ENCODE measurements at regions of chr7 and their contacts with region 1.

Region 1: DNA sequence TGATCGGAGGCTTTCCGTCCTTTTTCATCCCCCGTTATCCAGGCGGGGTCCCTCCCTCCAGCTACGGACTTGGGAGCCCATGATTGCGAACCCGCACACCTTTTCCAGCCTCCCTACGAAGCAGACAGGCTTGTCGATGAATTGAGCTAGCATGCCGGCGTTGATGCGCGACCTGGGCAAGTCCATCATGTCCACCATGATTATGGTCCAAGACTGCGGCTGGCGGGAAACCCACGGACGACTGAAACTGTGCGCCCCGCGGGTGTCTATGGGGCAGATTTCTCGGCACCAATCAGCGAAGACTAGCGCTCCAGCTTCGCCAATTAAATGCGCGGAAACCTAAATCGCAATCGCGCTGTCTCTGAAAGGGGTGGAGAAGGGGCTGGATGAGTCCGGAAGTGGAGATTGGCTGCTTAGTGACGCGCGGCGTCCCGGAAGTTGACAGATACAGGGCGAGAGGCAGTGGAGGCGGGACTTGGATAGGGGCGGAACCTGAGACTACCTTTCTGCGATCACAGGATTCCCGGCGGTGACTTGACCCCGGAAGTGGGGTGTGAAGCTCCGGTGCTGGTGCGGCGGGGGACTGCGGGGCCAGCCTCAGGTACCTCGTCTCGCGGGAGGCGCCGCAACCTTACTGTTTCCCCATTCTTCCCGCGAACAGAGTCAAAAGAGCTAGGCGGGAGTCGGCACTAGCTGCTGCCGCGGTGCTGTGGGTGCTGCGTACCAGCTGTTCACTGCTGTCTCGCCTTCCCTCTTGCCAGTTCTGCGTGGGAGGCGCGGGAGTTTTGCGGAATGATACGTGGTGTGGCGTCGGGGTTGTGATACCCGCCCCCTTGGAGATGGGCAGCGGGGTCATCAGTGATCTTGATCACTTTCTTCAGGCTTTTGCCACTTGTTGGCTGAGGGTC is at the start of gene UMAD1:
- DNase-seq: peak; percentile 99
- ATAC-seq: peak; percentile 100
- total RNA-seq, gene UMAD1: 13.3 TPM

Region 2: GRCh38 chr7:7911371-7912155 is 271.1 kb after region 1 on chr7:
- intact Hi-C with region 1: no loop called
- DNase-seq: no peak
- ATAC-seq: no peak

Region 3: DNA sequence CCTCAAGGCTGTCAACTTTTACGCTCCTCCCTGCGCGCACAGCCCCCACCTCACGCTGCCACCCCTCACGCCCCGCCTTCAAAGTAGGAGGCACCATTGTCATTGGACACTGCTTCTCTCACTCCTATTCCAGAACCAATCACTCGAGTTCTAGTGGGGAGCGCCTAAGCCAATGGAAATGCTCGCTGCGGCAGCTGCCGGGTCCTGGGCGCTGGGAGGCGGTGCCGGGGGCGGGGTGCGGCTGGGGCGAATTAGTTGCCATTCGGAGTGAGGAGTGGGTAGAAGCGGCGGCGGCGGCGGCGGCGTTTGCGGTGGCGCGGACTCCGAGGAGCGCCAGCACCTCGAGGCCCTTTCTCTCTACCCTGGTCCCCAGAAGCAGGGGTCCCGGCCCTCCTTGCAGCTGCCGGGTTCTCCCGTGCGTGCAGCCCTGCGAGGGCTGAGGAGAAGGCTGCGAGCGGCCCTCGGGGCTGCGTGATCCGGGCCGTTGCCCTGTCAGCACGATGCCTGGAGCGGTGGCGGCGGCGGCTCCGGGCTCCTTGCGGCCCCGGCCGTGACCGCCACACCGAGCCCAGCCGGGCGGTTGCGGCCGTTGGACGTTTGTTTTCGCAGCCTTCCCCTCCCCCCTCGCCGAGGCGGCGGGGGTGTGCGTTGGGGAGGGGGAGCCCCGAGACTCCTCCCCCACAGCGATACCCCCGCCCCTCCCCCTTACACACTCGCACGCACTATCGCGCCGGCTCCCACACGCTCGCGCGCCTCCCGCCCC is 328.2 kb after region 1 on chr7 and contains the start of gene GLCCI1:
- intact Hi-C with region 1: loop called (anchors 2 kb)
- DNase-seq: peak; percentile 97
- ATAC-seq: peak; percentile 99
- total RNA-seq, gene GLCCI1: 5.7 TPM

Measured in Right ventricle myocardium inferior (tissue), 1 donor.